Naive thymus-derived CD4-positive, alpha-beta T cell (primary cell): ENCODE measurements at regions of chr10 and their contacts with region 1.

Region 1: GRCh38 chr10:122703439-122704118 is 3.9 kb upstream of the C10orf120 start:
- DNase-seq: peak; percentile 2 to 47 (median 33)
- ATAC-seq: peak; percentile 57
- H3K4me3 ChIP-seq: no peak overlapping the region
- H3K4me3 Mint-ChIP-seq: no peak overlapping the region
- H3K27ac ChIP-seq: no peak overlapping the region
- H3K27ac Mint-ChIP-seq: no peak overlapping the region
- H3K4me1 ChIP-seq: peaks cover 0 to 5% of the 10 kb centered on the region in 2 donors
- H3K4me1 Mint-ChIP-seq: peaks cover 0 to 8% (median 0%) of the 10 kb centered on the region in 7 donors
- H3K27me3 ChIP-seq: no peaks in the 10 kb centered on the region
- H3K27me3 Mint-ChIP-seq: peaks cover 0 to 20% (median 5%) of the 10 kb centered on the region in 5 donors

Region 2: DNA sequence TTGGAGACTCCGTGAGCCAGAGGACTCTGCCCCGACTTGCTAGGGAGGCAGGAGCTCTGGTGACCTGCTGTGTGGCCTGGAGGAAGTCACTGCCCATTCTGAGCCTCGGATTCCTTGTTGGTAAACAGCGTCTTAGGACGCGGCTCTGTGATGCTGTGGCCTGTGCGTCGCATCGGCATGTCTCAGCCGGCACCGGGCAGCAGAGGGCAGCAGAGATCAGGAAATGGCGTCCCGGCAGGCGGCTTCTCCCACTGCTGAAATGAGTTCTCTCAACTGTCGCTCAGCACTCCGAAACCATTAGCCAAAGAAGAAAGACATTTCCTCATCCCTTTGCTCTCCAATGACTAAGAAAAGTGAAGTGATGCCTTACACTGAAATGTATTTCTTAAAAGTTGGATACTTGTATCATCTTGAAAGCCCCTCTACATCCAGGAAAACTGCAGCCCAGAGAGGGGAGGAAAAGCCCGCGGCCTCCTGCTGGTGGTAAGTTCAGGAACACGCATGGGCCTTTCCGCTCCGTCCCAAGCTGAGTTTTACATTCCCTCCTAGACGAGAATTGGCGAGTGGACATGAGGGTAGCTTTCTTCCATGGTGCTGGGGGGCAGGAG is 1760.7 kb before region 1 on chr10:
- CTCF ChIA-PET with region 1: no interaction called
- POLR2A ChIA-PET with region 1: no interaction called
- intact Hi-C with region 1: loop called in 1 of 2 experiments (anchors 10 kb)
- DNase-seq: peak; percentile 29 to 81 (median 58)
- ATAC-seq: peak; percentile 90
- H3K4me3 ChIP-seq: no peak overlapping the region
- H3K4me3 Mint-ChIP-seq: peak overlapping the region in 5 of 10 donors; percentile 25 to 65 (median 32)
- H3K27ac ChIP-seq: no peak overlapping the region
- H3K27ac Mint-ChIP-seq: no peak overlapping the region
- H3K4me1 ChIP-seq: no peaks in the 10 kb centered on the region
- H3K4me1 Mint-ChIP-seq: peaks cover 0 to 11% (median 5%) of the 10 kb centered on the region in 7 donors
- H3K27me3 ChIP-seq: no peaks in the 10 kb centered on the region
- H3K27me3 Mint-ChIP-seq: peaks cover 4 to 44% (median 20%) of the 10 kb centered on the region in 5 donors

Region 3: GRCh38 chr10:122298598-122299301 is 404.8 kb before region 1 on chr10:
- CTCF ChIA-PET with region 1: interaction called, 12 read pairs
- POLR2A ChIA-PET with region 1: no interaction called
- intact Hi-C with region 1: loop called (anchors 1 to 10 kb)
- DNase-seq: peak; percentile 30 to 66 (median 53)
- ATAC-seq: peak; percentile 88
- H3K4me3 ChIP-seq: no peak overlapping the region
- H3K4me3 Mint-ChIP-seq: peak overlapping the region in 5 of 10 donors; percentile 27 to 63 (median 51)
- H3K27ac ChIP-seq: no peak overlapping the region
- H3K27ac Mint-ChIP-seq: no peak overlapping the region
- H3K4me1 ChIP-seq: no peaks in the 10 kb centered on the region
- H3K4me1 Mint-ChIP-seq: peaks cover 0 to 10% (median 8%) of the 10 kb centered on the region in 7 donors
- H3K27me3 ChIP-seq: no peaks in the 10 kb centered on the region
- H3K27me3 Mint-ChIP-seq: peaks cover 0 to 5% (median 0%) of the 10 kb centered on the region in 5 donors

Region 4: GRCh38 chr10:122435212-122435827 is 268.3 kb before region 1 on chr10:
- CTCF ChIA-PET with region 1: no interaction called
- POLR2A ChIA-PET with region 1: no interaction called
- intact Hi-C with region 1: loop called in 1 of 2 experiments (anchors 5 kb)
- DNase-seq: peak in 7 of 9 donors; percentile 33 to 73 (median 62)
- ATAC-seq: peak; percentile 70
- H3K4me3 ChIP-seq: no peak overlapping the region
- H3K4me3 Mint-ChIP-seq: no peak overlapping the region
- H3K27ac ChIP-seq: no peak overlapping the region
- H3K27ac Mint-ChIP-seq: peak overlapping the region in 5 of 9 donors; percentile 32 to 81 (median 53)
- H3K4me1 ChIP-seq: no peaks in the 10 kb centered on the region
- H3K4me1 Mint-ChIP-seq: peaks cover 0 to 14% (median 8%) of the 10 kb centered on the region in 7 donors
- H3K27me3 ChIP-seq: no peaks in the 10 kb centered on the region
- H3K27me3 Mint-ChIP-seq: no peaks in the 10 kb centered on the region

Region 5: GRCh38 chr10:122648599-122649428 is 54.8 kb before region 1 on chr10:
- CTCF ChIA-PET with region 1: no interaction called
- POLR2A ChIA-PET with region 1: no interaction called
- intact Hi-C with region 1: loop called in 1 of 2 experiments (anchors 1 kb)
- DNase-seq: peak in 1 of 9 donors; percentile 9
- ATAC-seq: peak; percentile 32
- H3K4me3 ChIP-seq: no peak overlapping the region
- H3K4me3 Mint-ChIP-seq: no peak overlapping the region
- H3K27ac ChIP-seq: no peak overlapping the region
- H3K27ac Mint-ChIP-seq: no peak overlapping the region
- H3K4me1 ChIP-seq: no peaks in the 10 kb centered on the region
- H3K4me1 Mint-ChIP-seq: no peaks in the 10 kb centered on the region
- H3K27me3 ChIP-seq: no peaks in the 10 kb centered on the region
- H3K27me3 Mint-ChIP-seq: peaks cover 14 to 49% (median 16%) of the 10 kb centered on the region in 5 donors